ENCODE measurements at regions of chr17 and their contacts with region 1.

Region 1: DNA sequence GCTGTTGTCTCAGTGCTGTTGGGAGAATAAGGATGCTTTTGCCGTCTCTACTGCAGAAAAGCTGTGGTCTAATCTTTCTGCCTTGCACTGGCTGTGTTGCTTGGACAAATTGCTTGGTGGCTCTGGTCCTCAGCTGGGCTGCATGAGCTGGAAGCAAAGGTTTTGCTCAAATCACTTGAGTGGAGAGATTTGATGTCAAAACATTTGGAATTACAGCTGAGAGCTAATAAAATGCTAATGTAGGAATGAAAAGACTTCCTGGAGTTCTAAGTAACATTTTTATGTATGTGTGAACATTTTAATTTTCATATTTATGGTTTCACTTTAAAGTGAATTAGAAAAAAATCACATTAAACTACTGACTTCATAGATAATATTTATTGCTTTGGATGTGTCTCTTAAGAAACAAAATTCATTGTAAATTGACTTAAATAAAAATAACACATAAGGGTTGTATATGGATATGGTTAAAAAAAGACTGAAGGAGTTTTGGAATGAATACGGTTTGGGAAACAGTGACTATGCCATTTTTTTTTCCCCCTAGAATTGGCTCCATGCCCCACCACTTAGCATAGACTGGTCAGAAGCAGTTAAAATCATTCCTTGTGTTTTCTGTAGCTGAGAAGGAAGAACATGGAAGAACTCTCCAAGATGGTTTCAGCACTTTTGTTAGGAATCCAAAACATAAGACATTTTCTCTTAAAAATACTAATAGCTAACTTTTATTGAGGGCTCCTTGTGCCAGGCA is 39.2 kb upstream of the FAM20A start:
- DNase-seq: no peak
- ATAC-seq: no peak
- H3K4me3 ChIP-seq: no peak overlapping the region
- H3K27ac ChIP-seq: no peak overlapping the region
- H3K4me1 ChIP-seq: no peaks in the 10 kb centered on the region
- H3K27me3 ChIP-seq: no peaks in the 10 kb centered on the region
- CTCF ChIP-seq: no peak
- POLR2A ChIP-seq: no peak

Region 2: GRCh38 chr17:68697850-68698361 is 57.5 kb after region 1 on chr17:
- in situ Hi-C with region 1: no loop called
- intact Hi-C with region 1: loop called (anchors 5 kb)
- DNase-seq: peak in 1 of 2 donors; percentile 8
- ATAC-seq: peak in 1 of 2 donors; percentile 41
- H3K4me3 ChIP-seq: no peak overlapping the region
- H3K27ac ChIP-seq: peak overlapping the region in 1 of 4 donors; percentile 22
- H3K4me1 ChIP-seq: no peaks in the 10 kb centered on the region
- H3K27me3 ChIP-seq: no peaks in the 10 kb centered on the region
- CTCF ChIP-seq: no peak
- POLR2A ChIP-seq: no peak

Measured in gastrocnemius medialis (tissue), 4 donors.